RWPE1 (cell line): ENCODE measurements at regions of chr2 and their contacts with region 1.

Region 1: GRCh38 chr2:60793169-60793568 is 37.1 kb downstream of the PAPOLG start:
- DNase-seq: no peak
- H3K27ac ChIP-seq: no peak overlapping the region
- CTCF ChIP-seq: no peak

Region 2: DNA sequence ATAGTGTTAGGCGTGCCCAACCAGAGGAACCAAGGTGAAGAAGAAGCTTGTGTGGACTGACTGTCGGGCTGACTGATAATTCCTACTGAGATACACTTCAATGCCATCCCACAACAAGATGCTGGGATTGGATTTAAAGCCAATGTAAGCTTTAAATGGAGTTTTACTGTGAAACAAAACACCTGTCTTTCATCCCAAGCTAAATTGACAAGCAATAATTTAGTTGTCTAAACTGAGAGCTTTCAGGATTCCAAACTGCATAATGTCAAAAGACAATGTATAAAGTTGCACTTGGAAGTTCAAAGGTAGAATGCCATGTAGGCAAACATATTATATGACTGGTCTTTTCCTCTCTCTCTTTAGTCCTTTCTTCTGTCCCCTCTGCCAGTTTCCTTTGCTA is 1526.7 kb before region 1 on chr2:
- CTCF ChIA-PET with region 1: interaction called, 10 read pairs
- POLR2A ChIA-PET with region 1: no interaction called
- DNase-seq: no peak
- H3K27ac ChIP-seq: no peak overlapping the region
- CTCF ChIP-seq: no peak

Region 3: DNA sequence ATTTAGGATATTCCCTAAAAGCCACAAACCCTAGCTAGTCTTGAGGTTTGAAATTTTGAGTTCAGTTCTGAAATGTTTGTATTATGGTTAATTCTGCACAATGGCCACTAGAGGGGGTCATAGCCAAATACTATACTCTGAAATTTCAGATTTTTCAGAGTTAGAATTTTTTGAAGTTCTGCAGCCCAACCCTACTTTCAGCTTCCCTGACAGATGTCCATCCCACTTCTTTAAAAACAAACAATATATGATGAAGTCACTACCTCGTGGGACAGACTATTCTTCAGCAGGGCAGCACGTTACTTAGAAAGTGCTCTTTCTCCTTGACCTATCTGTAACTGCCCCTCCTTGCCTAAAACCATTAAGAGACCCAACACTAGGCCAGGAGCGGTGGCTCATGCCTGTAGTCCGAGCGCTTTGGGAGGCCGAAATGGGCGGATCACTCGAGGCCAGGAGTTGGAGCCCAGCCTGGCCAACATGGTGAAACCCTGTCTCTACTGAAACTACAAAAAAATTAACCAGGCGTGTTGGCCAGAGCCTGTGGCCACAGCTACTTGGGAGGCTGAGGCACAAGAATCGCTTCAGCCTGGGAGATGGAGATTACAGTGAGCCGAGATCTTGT is 85.3 kb before region 1 on chr2:
- CTCF ChIA-PET with region 1: no interaction called
- POLR2A ChIA-PET with region 1: interaction called, 18 read pairs
- DNase-seq: peak; percentile 46
- H3K27ac ChIP-seq: no peak overlapping the region
- CTCF ChIP-seq: peak; percentile 81